ENCODE measurements at regions of chr7 and their contacts with region 1.

Region 1: GRCh38 chr7:28853834-28854749 is 104.0 kb downstream of the TRIL start:
- DNase-seq: peak; percentile 40
- ATAC-seq: peak; percentile 100
- H3K4me3 ChIP-seq: peak overlapping the region; percentile 51 to 74 (median 54)
- H3K27ac ChIP-seq: no peak overlapping the region
- H3K4me1 ChIP-seq: peaks cover 34% of the 10 kb centered on the region; the same call in 1 of the 2 replicates
- H3K27me3 ChIP-seq: peaks cover 0 to 23% of the 10 kb centered on the region in 2 experiments; a peak in 4 of 5 replicates
- CTCF ChIP-seq: peak; percentile 92
- EP300 ChIP-seq: no peak
- POLR2A ChIP-seq: no peak
- RAD21 ChIP-seq: peak; percentile 83

Region 2: GRCh38 chr7:28383975-28384374 is 470.1 kb before region 1 on chr7:
- CTCF ChIA-PET with region 1: interaction called, 11 read pairs
- POLR2A ChIA-PET with region 1: no interaction called
- in situ Hi-C with region 1: loop called (anchors 5 kb)
- intact Hi-C with region 1: loop called (anchors 1 kb)
- DNase-seq: no peak
- ATAC-seq: no peak
- H3K4me3 ChIP-seq: no peak overlapping the region
- H3K27ac ChIP-seq: no peak overlapping the region
- H3K4me1 ChIP-seq: no peaks in the 10 kb centered on the region
- H3K27me3 ChIP-seq: no peaks in the 10 kb centered on the region; a peak in 1 of 5 replicates
- CTCF ChIP-seq: no peak
- EP300 ChIP-seq: no peak
- POLR2A ChIP-seq: no peak
- RAD21 ChIP-seq: no peak

Region 3: GRCh38 chr7:28389504-28390395 is 464.3 kb before region 1 on chr7:
- CTCF ChIA-PET with region 1: interaction called, 11 read pairs
- POLR2A ChIA-PET with region 1: no interaction called
- in situ Hi-C with region 1: loop called (anchors 5 kb)
- intact Hi-C with region 1: loop called (anchors 1 kb)
- DNase-seq: peak; percentile 29
- ATAC-seq: no peak
- H3K4me3 ChIP-seq: no peak overlapping the region
- H3K27ac ChIP-seq: no peak overlapping the region
- H3K4me1 ChIP-seq: no peaks in the 10 kb centered on the region
- H3K27me3 ChIP-seq: no peaks in the 10 kb centered on the region; a peak in 1 of 5 replicates
- CTCF ChIP-seq: peak; percentile 46
- EP300 ChIP-seq: no peak
- POLR2A ChIP-seq: no peak
- RAD21 ChIP-seq: no peak

Region 4: DNA sequence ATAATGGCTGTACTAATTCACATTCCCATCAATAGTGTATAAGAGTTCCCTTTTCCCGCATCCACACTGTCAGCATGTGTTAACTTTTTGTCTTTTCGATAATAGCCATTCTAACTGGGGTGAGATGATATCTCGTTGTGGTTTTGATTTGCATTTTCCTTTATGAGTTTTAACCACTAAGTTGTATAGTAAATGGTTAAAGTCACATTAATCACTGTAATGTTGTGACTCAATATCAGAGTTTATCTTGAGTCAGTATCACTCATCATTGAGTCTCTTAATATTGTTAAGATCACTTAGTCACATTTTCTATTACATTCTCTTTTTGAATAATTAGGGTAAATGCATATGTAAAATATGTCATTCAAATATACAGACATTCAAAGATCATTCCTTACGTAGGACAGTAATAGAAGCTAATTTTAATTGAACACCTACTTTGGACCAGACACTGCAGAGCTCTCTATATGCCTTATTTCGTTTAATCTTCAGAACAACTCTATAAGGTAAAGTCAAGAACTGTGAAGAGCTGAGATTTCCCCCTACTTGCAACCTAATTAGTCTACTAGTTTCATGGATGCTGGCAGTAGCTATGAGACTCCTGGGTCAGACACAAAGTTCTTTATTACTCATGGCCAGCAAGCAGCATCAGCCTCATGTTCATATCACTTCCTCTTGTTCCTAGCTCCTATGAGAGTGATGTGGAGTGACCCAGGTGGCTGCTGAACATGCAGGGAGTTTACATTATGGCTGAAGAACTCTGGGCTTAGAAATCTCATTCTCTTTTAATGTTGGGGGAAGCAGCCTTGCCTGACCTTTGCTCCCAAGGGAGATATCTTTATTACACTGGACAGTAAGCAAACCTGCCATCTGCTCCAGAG is 411.3 kb before region 1 on chr7:
- CTCF ChIA-PET with region 1: no interaction called
- POLR2A ChIA-PET with region 1: no interaction called
- in situ Hi-C with region 1: no loop called
- intact Hi-C with region 1: no loop called
- DNase-seq: no peak
- ATAC-seq: no peak
- H3K4me3 ChIP-seq: no peak overlapping the region
- H3K27ac ChIP-seq: no peak overlapping the region
- H3K4me1 ChIP-seq: no peaks in the 10 kb centered on the region
- H3K27me3 ChIP-seq: peaks cover 0 to 1% of the 10 kb centered on the region in 2 experiments; a peak in 2 of 5 replicates
- CTCF ChIP-seq: no peak
- EP300 ChIP-seq: no peak
- POLR2A ChIP-seq: no peak
- RAD21 ChIP-seq: no peak

Region 5: GRCh38 chr7:28573059-28573553 is 281.0 kb before region 1 on chr7:
- CTCF ChIA-PET with region 1: no interaction called
- POLR2A ChIA-PET with region 1: no interaction called
- in situ Hi-C with region 1: no loop called
- intact Hi-C with region 1: no loop called
- DNase-seq: peak; percentile 18
- ATAC-seq: no peak
- H3K4me3 ChIP-seq: no peak overlapping the region
- H3K27ac ChIP-seq: no peak overlapping the region
- H3K4me1 ChIP-seq: no peaks in the 10 kb centered on the region
- H3K27me3 ChIP-seq: peaks cover 0 to 9% of the 10 kb centered on the region in 2 experiments; a peak in 1 of 5 replicates
- CTCF ChIP-seq: no peak
- EP300 ChIP-seq: no peak
- POLR2A ChIP-seq: no peak
- RAD21 ChIP-seq: no peak

Region 6: DNA sequence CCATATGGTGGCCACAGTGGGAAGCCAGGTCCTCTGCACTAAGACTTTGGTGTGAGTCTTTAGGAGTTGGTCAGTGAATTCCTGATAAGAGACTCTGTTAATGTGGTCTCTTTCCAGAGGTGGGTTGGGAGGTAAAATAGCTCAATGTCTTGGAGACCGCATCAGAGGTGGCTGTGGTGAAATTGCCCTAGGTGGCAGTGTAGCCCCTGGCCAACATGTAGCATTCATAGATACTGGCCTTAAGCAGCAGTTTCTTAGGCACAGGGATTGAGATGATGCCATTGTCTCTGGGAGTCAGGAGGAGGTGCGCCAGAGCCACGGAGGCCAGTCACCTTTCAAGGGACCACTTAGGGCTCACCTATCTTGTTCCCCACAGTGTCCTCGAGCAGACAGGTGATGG is 239.0 kb before region 1 on chr7:
- CTCF ChIA-PET with region 1: no interaction called
- POLR2A ChIA-PET with region 1: no interaction called
- in situ Hi-C with region 1: loop called (anchors 10 kb)
- intact Hi-C with region 1: no loop called
- DNase-seq: no peak
- ATAC-seq: peak; percentile 57
- H3K4me3 ChIP-seq: no peak overlapping the region
- H3K27ac ChIP-seq: no peak overlapping the region
- H3K4me1 ChIP-seq: peaks cover 9% of the 10 kb centered on the region
- H3K27me3 ChIP-seq: no peaks in the 10 kb centered on the region
- CTCF ChIP-seq: peak; percentile 32; the same call in 1 of the 2 replicates
- EP300 ChIP-seq: no peak
- POLR2A ChIP-seq: no peak
- RAD21 ChIP-seq: no peak